Ovary (tissue), 10 donors: ENCODE measurements at regions of chr11 and their contacts with region 1.

Region 1: DNA sequence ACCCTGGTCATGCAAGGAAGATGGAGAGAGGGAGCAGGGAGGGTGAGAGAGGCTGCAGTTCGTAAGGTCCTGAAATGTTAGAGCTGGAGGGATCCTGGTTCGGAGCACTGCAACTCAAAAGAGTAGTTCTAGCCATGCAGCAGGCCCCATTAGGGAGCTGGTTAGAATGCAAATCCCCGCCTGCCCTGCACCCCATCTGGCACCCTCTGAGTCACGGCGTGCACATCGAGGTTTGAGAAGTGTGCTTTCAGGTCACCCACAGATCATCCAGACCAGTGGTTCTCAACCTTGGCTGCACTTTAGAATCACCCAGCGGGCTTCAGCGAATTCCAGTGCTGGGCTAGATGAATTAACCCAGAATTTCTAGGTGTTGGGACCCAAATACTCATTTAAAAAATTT is 48.2 kb downstream of the ST3GAL4 start:
- DNase-seq: peak in 1 of 5 donors; percentile 40
- H3K4me3 ChIP-seq: no peak overlapping the region
- H3K27ac ChIP-seq: no peak overlapping the region
- H3K4me1 ChIP-seq: peaks cover 13% of the 10 kb centered on the region
- H3K27me3 ChIP-seq: no peaks in the 10 kb centered on the region
- CTCF ChIP-seq: no peak
- EP300 ChIP-seq: no peak
- POLR2A ChIP-seq: no peak

Region 2: GRCh38 chr11:126355324-126355925 is 48.2 kb before region 1 on chr11 and contains the start of gene ST3GAL4:
- intact Hi-C with region 1: no loop called
- DNase-seq: peak; percentile 88 to 93 (median 92)
- H3K4me3 ChIP-seq: peak within 1 kb of the TSS; percentile 70
- H3K27ac ChIP-seq: peak within 1 kb of the TSS; percentile 82 to 95
- H3K4me1 ChIP-seq: peaks cover 39% of the 10 kb centered on the region
- H3K27me3 ChIP-seq: no peaks in the 10 kb centered on the region
- CTCF ChIP-seq: peak in 1 of 3 donors; percentile 6
- EP300 ChIP-seq: no peak
- POLR2A ChIP-seq: peak; percentile 50
- total RNA-seq, gene ST3GAL4: 75.8 to 300 (median 135) TPM

Region 3: GRCh38 chr11:127656116-127656836 is 1252.6 kb after region 1 on chr11:
- intact Hi-C with region 1: loop called in 1 of 4 experiments (anchors 5 kb)
- DNase-seq: no peak
- H3K4me3 ChIP-seq: no peak overlapping the region
- H3K27ac ChIP-seq: no peak overlapping the region
- H3K4me1 ChIP-seq: no peaks in the 10 kb centered on the region
- H3K27me3 ChIP-seq: no peaks in the 10 kb centered on the region
- CTCF ChIP-seq: no peak
- EP300 ChIP-seq: no peak
- POLR2A ChIP-seq: no peak